IMR-90 (cell line): ENCODE measurements at regions of chr11 and their contacts with region 1.

Region 1: GRCh38 chr11:11239959-11240358 is 113.1 kb downstream of the CSNK2A3 start:
- DNase-seq: no peak
- ATAC-seq: no peak
- H3K4me3 ChIP-seq: no peak overlapping the region
- H3K27ac ChIP-seq: no peak overlapping the region
- H3K4me1 ChIP-seq: no peaks in the 10 kb centered on the region
- H3K27me3 ChIP-seq: peaks cover 15% of the 10 kb centered on the region
- CTCF ChIP-seq: no peak
- POLR2A ChIP-seq: no peak
- RAD21 ChIP-seq: no peak

Region 2: DNA sequence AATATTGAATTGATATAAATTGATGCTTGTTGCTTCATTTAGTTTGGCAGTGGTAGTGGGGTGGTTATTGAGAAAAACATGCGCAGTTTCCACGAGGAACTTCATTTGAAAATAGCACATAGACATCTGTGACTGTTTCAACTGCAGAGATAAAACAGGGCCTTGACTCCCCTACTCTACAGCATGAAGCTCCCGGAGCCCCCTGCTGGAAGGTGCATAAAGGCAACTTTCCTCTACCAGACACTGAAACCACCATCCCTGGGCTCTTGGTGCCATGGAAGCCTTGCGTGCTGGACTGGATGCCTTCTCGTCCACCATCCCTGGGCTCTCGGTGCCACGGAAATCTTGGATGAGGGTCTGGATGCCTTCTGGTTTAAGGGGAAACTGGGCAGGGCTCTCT is 82.8 kb before region 1 on chr11:
- CTCF ChIA-PET with region 1: no interaction called
- POLR2A ChIA-PET with region 1: interaction called, 13 read pairs
- dilution Hi-C with region 1: no loop called
- in situ Hi-C with region 1: no loop called
- intact Hi-C with region 1: no loop called
- DNase-seq: peak; percentile 8
- ATAC-seq: peak; percentile 42; the same call in 1 of the 2 replicates
- H3K4me3 ChIP-seq: no peak overlapping the region
- H3K27ac ChIP-seq: no peak overlapping the region
- H3K4me1 ChIP-seq: no peaks in the 10 kb centered on the region
- H3K27me3 ChIP-seq: peaks cover 49% of the 10 kb centered on the region
- CTCF ChIP-seq: peak; percentile 38
- POLR2A ChIP-seq: no peak
- RAD21 ChIP-seq: peak; percentile 44

Region 3: GRCh38 chr11:12008790-12009616 is 769.0 kb after region 1 on chr11:
- CTCF ChIA-PET with region 1: no interaction called
- POLR2A ChIA-PET with region 1: no interaction called
- dilution Hi-C with region 1: no loop called
- in situ Hi-C with region 1: no loop called
- intact Hi-C with region 1: no loop called
- DNase-seq: peak; percentile 46
- ATAC-seq: peak; percentile 89
- H3K4me3 ChIP-seq: peak overlapping the region; percentile 100
- H3K27ac ChIP-seq: peak overlapping the region; percentile 96
- H3K4me1 ChIP-seq: peaks cover 30% of the 10 kb centered on the region
- H3K27me3 ChIP-seq: no peaks in the 10 kb centered on the region
- CTCF ChIP-seq: no peak
- POLR2A ChIP-seq: no peak
- RAD21 ChIP-seq: no peak